Tibial artery (tissue), 4 donors: ENCODE measurements at regions of chr13 and their contacts with region 1.

Region 1: GRCh38 chr13:40477623-40478608 is 188.5 kb downstream of the FOXO1 start:
- DNase-seq: peak; percentile 85
- H3K4me3 ChIP-seq: no peak overlapping the region
- H3K27ac ChIP-seq: peak overlapping the region; percentile 68 to 74
- H3K4me1 ChIP-seq: peaks cover 3 to 35% (median 28%) of the 10 kb centered on the region in 4 donors
- H3K27me3 ChIP-seq: no peaks in the 10 kb centered on the region
- CTCF ChIP-seq: no peak

Region 2: DNA sequence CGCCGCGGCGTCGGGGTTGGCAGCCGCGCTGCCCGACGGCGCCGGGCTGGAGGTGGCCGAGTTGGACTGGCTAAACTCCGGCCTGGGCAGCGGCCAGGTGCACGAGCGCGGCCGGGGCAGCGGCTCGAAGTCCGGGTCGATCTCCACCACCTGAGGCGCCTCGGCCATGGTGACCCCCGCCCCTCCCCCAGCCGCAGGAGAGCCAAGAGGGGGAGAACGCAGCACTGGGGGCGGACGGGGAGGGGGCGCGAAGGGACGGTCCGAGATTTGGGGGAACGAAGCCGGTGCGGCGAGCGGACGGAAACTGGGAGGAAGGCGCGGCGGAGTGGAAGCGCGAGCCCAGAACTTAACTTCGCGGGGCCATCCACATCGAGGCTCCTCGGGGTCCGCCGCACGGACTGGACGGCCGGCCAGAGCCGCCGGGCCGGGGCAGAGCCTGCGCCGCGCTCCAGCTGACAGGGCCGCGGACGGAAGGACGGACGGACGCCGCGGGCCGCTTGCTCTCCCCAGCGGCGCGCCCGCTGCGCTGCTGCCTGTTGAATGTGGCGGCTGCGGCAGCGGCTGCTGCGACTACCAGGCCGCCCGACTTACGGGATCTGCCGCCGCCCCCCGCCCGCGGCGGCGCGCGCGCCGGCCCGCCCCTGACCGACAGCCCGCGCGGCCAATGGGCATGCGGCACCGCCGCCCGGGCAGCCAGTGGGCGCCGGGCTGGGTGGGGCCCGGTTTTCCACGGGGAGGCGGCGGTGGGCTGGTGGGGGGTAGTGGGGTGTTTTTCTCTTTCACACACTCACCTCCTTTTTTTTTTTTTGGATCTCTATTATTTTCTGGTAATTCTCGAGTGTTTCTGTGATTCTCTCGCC is 188.4 kb after region 1 on chr13 and contains the start of gene FOXO1:
- intact Hi-C with region 1: loop called (anchors 10 kb)
- DNase-seq: peak; percentile 84 to 95
- H3K4me3 ChIP-seq: peak within 1 kb of the TSS; percentile 71 to 99
- H3K27ac ChIP-seq: peak within 1 kb of the TSS; percentile 97 to 100
- H3K4me1 ChIP-seq: peaks cover 0 to 38% (median 15%) of the 10 kb centered on the region in 4 donors
- H3K27me3 ChIP-seq: no peaks in the 10 kb centered on the region
- CTCF ChIP-seq: no peak

Region 3: DNA sequence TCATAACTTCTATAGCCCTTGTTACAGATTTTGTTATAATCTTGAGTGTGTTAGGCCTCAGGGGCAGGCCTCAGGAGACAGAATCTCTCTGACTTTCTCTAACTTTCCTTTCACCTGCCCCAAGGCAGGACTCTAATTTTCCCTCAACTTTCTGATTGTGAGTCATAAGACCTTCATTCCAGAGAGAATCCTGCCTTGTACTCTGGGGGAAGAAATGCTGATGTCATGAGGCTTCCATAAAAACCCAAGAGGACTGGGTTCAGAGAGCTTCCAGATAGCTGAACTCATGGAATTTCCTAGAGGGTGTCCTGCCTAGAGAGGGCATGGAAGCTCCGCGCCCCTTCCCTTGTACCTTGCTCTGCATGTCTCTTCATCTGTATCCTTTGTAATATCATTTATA is 660.0 kb after region 1 on chr13:
- intact Hi-C with region 1: no loop called
- DNase-seq: no peak
- H3K4me3 ChIP-seq: no peak overlapping the region
- H3K27ac ChIP-seq: no peak overlapping the region
- H3K4me1 ChIP-seq: no peaks in the 10 kb centered on the region
- H3K27me3 ChIP-seq: no peaks in the 10 kb centered on the region
- CTCF ChIP-seq: no peak